Cardiac septum (tissue), 1 donor: ENCODE measurements at regions of chr6 and their contacts with region 1.

Region 1: GRCh38 chr6:153032255-153032882 is 29.9 kb upstream of the MTRF1L start:
- DNase-seq: no peak

Region 2: DNA sequence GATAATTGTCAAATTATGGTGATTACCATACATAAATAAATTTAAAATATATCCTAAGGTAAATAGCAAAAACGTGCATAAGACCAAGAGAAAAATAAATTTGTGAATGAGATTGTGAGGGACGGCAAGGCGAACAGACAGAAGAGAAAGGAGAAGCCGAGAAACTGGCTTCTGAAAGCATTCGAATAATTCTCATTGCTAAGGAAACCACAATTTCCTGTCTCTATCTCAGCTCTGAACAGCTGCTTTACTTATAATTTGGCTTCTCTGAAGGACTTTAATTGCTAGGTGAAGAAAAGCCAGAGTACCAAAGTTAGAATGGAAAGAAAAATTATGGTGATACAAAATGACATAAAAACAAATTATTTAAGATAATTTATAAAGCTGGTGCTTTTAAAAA is 177.7 kb after region 1 on chr6:
- intact Hi-C with region 1: loop called (anchors 10 kb)
- DNase-seq: no peak

Region 3: GRCh38 chr6:153465050-153465449 is 432.7 kb after region 1 on chr6:
- intact Hi-C with region 1: no loop called
- DNase-seq: no peak

Region 4: GRCh38 chr6:153511896-153512496 is 479.6 kb after region 1 on chr6:
- intact Hi-C with region 1: loop called (anchors 10 kb)
- DNase-seq: no peak